ENCODE measurements at regions of chr7 and their contacts with region 1.

Region 1: DNA sequence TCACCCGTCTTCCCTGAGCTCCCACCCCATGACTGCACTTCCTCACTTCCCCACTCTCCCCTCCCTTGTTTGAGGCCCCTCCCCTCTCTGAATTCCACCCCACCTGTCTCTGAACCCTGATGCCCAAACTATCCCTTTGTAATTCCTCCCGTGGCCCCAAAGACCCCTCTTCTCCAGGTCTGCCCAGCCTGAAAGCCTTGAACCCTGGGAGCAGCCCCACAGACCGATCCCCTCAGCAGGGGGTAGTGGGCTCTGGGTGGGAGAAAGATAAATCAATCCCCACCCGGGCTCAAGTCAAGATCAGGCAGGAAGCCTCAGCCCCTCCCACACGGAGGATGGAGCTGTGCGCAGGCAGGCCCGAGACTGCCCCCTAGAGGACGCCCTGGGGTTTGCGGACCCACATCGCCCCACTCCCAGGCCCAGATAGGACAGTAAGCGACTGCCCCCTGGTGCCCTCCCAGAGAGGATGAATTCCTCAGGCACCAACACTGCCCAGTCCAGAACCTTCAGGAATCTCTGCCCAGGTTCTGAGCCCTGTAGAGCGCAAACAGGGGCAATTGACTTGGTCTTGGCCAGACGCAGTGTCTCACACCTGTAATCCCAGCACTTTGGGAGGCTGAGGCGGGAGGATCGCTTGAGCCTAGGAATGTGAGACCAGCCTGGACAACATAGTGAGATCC is 11.7 kb downstream of the HSPB1 start:
- DNase-seq: peak; percentile 89
- ATAC-seq: peak; percentile 65
- H3K4me3 ChIP-seq: no peak overlapping the region
- H3K27ac ChIP-seq: no peak overlapping the region
- H3K4me1 ChIP-seq: peaks cover 6% of the 10 kb centered on the region
- H3K27me3 ChIP-seq: no peaks in the 10 kb centered on the region
- CTCF ChIP-seq: peak; percentile 100
- POLR2A ChIP-seq: peak; percentile 76
- RAD21 ChIP-seq: peak; percentile 100

Region 2: GRCh38 chr7:76179686-76180085 is 134.5 kb before region 1 on chr7:
- CTCF ChIA-PET with region 1: interaction called, 11 read pairs
- POLR2A ChIA-PET with region 1: no interaction called
- dilution Hi-C with region 1: no loop called
- in situ Hi-C with region 1: loop called (anchors 5 kb)
- intact Hi-C with region 1: loop called (anchors 1 kb)
- DNase-seq: no peak
- ATAC-seq: no peak
- H3K4me3 ChIP-seq: no peak overlapping the region
- H3K27ac ChIP-seq: no peak overlapping the region
- H3K4me1 ChIP-seq: no peaks in the 10 kb centered on the region
- H3K27me3 ChIP-seq: no peaks in the 10 kb centered on the region
- CTCF ChIP-seq: no peak
- POLR2A ChIP-seq: no peak
- RAD21 ChIP-seq: no peak

Region 3: GRCh38 chr7:76262683-76263402 is 51.3 kb before region 1 on chr7:
- CTCF ChIA-PET with region 1: interaction called, 3 read pairs
- POLR2A ChIA-PET with region 1: no interaction called
- dilution Hi-C with region 1: no loop called
- in situ Hi-C with region 1: no loop called
- intact Hi-C with region 1: loop called (anchors 2 kb)
- DNase-seq: peak; percentile 60
- ATAC-seq: peak; percentile 92
- H3K4me3 ChIP-seq: no peak overlapping the region
- H3K27ac ChIP-seq: no peak overlapping the region
- H3K4me1 ChIP-seq: no peaks in the 10 kb centered on the region
- H3K27me3 ChIP-seq: peaks cover 33% of the 10 kb centered on the region
- CTCF ChIP-seq: peak; percentile 81
- POLR2A ChIP-seq: no peak
- RAD21 ChIP-seq: peak; percentile 78

Region 4: GRCh38 chr7:76359111-76359978 is 45.2 kb after region 1 on chr7:
- CTCF ChIA-PET with region 1: interaction called, 3 read pairs
- POLR2A ChIA-PET with region 1: interaction called, 10 read pairs
- dilution Hi-C with region 1: no loop called
- in situ Hi-C with region 1: no loop called
- intact Hi-C with region 1: loop called (anchors 5 kb)
- DNase-seq: peak; percentile 99
- ATAC-seq: peak; percentile 93
- H3K4me3 ChIP-seq: peak overlapping the region; percentile 98
- H3K27ac ChIP-seq: peak overlapping the region; percentile 99
- H3K4me1 ChIP-seq: peaks cover 12% of the 10 kb centered on the region
- H3K27me3 ChIP-seq: no peaks in the 10 kb centered on the region
- CTCF ChIP-seq: peak; percentile 94
- POLR2A ChIP-seq: peak; percentile 39
- RAD21 ChIP-seq: peak; percentile 66